IMR-90 (cell line): ENCODE measurements at regions of chr6 and their contacts with region 1.

Region 1: DNA sequence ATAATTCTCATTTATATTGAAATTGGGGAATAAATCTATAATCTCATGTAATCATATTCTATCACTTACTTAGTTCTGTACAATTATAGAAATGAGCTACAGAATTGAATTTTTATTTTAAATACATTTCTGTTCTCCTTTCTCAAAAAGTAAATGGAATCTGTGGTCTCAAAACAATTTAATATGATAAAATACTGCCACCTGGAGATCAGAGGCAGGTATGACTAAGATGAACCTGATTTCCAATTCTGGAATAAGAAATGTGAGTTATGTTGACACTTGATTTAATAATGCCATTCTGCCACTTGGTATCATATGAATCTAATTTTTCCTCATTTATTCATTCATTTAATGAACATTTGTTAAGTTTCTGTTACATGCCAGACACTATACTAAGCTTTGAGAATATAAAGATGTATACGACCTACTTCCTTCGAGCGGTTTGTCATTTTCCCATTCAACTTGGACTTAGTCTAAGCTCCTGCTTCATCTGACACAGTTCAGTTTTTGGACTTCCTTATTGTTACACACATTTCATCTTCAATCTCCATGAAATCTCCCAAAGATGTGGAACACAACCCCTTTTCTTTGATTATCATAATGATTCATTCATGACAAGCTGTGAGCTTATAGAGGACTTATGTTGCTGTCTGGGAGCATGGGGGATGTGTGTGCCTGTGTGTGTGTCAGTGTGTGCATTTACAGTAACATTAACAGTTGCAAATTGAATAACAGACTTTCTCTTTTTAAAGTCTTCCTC is 7.5 kb upstream of the CCDC28A start:
- DNase-seq: peak; percentile 56
- ATAC-seq: peak; percentile 56; the same call in 1 of the 2 replicates
- H3K4me3 ChIP-seq: no peak overlapping the region
- H3K27ac ChIP-seq: no peak overlapping the region
- H3K4me1 ChIP-seq: no peaks in the 10 kb centered on the region
- H3K27me3 ChIP-seq: no peaks in the 10 kb centered on the region
- CTCF ChIP-seq: peak; percentile 71
- POLR2A ChIP-seq: no peak
- RAD21 ChIP-seq: peak; percentile 71

Region 2: GRCh38 chr6:138357928-138358327 is 408.1 kb before region 1 on chr6:
- CTCF ChIA-PET with region 1: no interaction called
- POLR2A ChIA-PET with region 1: no interaction called
- dilution Hi-C with region 1: no loop called
- in situ Hi-C with region 1: no loop called
- intact Hi-C with region 1: no loop called
- DNase-seq: no peak
- ATAC-seq: no peak
- H3K4me3 ChIP-seq: no peak overlapping the region
- H3K27ac ChIP-seq: no peak overlapping the region
- H3K4me1 ChIP-seq: no peaks in the 10 kb centered on the region
- H3K27me3 ChIP-seq: peaks cover 3% of the 10 kb centered on the region
- CTCF ChIP-seq: no peak
- POLR2A ChIP-seq: no peak
- RAD21 ChIP-seq: no peak

Region 3: DNA sequence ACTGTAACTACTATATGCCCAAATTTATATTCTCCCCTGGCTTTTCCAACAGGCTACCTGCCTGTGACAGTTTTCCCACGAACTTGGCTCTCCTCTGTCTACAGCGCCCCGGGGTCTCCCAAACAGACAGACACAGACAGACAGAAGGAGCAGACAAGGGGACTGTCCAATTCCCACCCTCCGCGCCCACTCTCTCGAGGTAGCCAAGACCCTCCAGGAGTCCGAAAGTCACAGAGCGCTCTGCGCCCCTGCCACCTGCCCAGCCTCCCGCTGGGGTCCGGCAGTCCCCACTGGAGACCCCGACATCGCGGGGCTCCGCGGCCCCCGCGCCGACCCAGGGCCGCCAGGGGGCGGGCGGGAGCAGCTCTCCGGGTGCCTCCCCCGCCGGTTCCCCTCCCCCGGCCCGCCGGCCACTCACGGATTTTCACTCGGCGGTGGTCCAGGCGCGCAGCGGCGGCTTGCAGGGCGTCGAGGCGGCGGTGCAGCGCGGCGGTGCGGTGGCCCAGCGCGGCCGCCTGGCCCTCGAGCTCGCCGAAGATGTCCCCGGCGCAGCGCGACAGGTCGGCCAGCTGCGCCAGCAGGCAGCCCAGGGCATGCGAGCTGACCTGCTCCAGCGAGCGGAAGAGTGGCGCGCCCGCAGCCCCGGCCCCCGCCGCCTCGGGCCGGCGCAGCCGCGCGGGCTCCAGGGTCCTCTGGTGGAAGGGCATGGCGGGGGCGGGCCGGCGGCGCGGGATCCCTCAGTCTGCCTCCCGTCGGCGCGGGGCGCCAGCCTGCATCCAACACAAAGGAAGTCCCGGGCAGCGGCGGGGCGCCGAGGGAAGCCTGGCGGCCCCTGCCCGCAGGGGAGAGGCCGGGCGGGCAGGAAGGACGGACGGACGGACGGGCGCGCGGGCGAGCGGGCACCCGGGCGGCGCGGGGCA is 73.8 kb before region 1 on chr6:
- CTCF ChIA-PET with region 1: no interaction called
- POLR2A ChIA-PET with region 1: no interaction called
- dilution Hi-C with region 1: no loop called
- in situ Hi-C with region 1: no loop called
- intact Hi-C with region 1: loop called (anchors 2 kb)
- DNase-seq: peak; percentile 50
- ATAC-seq: peak; percentile 79
- H3K4me3 ChIP-seq: peak overlapping the region; percentile 88
- H3K27ac ChIP-seq: peak overlapping the region; percentile 65
- H3K4me1 ChIP-seq: no peaks in the 10 kb centered on the region
- H3K27me3 ChIP-seq: no peaks in the 10 kb centered on the region
- CTCF ChIP-seq: peak; percentile 75
- POLR2A ChIP-seq: no peak
- RAD21 ChIP-seq: peak; percentile 40

Region 4: GRCh38 chr6:138896104-138896756 is 130.2 kb after region 1 on chr6:
- CTCF ChIA-PET with region 1: no interaction called
- POLR2A ChIA-PET with region 1: no interaction called
- dilution Hi-C with region 1: no loop called
- in situ Hi-C with region 1: no loop called
- intact Hi-C with region 1: no loop called
- DNase-seq: no peak
- ATAC-seq: no peak
- H3K4me3 ChIP-seq: no peak overlapping the region
- H3K27ac ChIP-seq: no peak overlapping the region
- H3K4me1 ChIP-seq: no peaks in the 10 kb centered on the region
- H3K27me3 ChIP-seq: no peaks in the 10 kb centered on the region
- CTCF ChIP-seq: no peak
- POLR2A ChIP-seq: no peak
- RAD21 ChIP-seq: no peak